Kidney (tissue), 22 donors: ENCODE measurements at regions of chr5 and their contacts with region 1.

Region 1: DNA sequence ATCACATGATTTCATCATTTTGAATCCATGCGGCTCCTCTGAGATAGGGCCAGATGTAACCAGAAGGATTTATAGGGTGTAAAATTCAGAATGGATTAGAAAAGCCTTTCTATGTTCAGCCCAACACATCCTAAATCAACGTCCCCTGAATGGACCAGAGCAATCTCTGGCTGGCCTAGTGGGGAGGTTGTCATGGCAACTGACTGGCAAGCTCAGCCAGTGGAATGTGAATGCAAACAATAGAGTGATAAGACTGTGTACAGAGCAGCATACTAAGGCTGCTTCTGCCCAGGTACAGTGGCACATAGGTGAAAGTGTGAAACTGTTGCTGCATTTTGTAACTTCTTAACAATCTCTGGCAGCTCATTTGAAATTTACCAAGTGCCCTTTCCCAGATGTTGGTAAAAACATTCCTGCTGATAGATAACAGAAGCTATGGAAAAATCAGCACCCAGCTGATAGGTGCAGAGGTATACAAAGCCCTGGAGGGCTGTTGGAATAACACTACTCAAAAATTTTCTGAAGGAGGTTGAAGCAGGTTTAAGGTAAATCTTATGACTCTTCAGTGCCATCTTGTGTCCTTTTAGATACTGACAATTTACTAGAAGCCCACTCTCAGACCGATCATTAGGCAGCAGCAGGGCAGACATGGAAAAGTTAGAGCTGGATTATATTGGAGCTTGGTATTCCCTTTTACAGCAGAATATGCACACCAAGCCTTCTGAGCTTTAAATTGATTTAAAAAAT is 267.2 kb downstream of the RAB3C start:
- DNase-seq: peak in 4 of 5 donors; percentile 21 to 72 (median 54)
- H3K4me3 ChIP-seq: no peak overlapping the region
- H3K27ac ChIP-seq: no peak overlapping the region
- H3K4me1 ChIP-seq: no peaks in the 10 kb centered on the region
- H3K27me3 ChIP-seq: no peaks in the 10 kb centered on the region
- CTCF ChIP-seq: peak; percentile 55

Region 2: GRCh38 chr5:58498340-58498942 is 351.7 kb before region 1 on chr5:
- intact Hi-C with region 1: loop called (anchors 5 kb)
- DNase-seq: peak in 3 of 5 donors; percentile 29 to 62 (median 41)
- H3K4me3 ChIP-seq: no peak overlapping the region
- H3K27ac ChIP-seq: no peak overlapping the region
- H3K4me1 ChIP-seq: no peaks in the 10 kb centered on the region
- H3K27me3 ChIP-seq: no peaks in the 10 kb centered on the region
- CTCF ChIP-seq: peak; percentile 68

Region 3: DNA sequence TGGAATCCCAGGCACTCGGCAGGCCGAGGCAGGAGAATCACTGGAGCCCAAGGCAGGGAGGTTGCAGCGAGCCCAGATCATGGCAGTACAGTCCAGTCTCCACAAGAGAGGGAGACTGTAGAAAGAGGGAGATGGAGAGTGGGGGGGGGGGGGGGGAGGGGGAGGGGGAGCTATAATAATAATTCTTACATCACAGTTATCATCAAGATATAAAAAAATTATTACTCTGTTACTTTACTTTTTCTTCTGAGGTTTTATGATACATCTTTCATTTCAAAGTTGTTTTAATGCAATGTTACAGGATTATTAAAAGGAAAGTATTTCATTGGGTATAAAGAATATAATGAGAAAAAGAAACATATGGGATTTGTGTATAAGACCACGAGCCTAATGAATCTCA is 285.1 kb before region 1 on chr5:
- intact Hi-C with region 1: no loop called
- DNase-seq: no peak
- H3K4me3 ChIP-seq: no peak overlapping the region
- H3K27ac ChIP-seq: no peak overlapping the region
- H3K4me1 ChIP-seq: no peaks in the 10 kb centered on the region
- H3K27me3 ChIP-seq: no peaks in the 10 kb centered on the region
- CTCF ChIP-seq: no peak

Region 4: DNA sequence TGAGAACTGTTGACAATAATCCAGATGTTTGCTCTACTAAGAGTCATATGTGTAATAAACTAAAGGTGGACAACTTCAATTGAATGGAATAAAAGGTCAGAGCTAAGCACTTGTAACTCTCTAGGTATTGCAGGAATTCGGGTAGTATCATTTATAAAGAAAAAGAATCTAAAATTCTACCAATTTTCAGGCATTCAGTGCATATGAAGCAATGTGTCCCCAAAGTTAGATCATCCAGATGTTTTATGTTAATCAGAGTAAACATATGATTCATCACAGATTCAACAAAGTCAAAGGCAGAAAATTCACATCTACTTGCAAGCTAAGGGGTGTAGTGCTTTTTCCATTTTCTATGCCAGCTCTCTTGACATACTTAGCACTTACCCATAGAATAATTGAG is 566.4 kb after region 1 on chr5:
- intact Hi-C with region 1: no loop called
- DNase-seq: no peak
- H3K4me3 ChIP-seq: no peak overlapping the region
- H3K27ac ChIP-seq: no peak overlapping the region
- H3K4me1 ChIP-seq: no peaks in the 10 kb centered on the region
- H3K27me3 ChIP-seq: no peaks in the 10 kb centered on the region
- CTCF ChIP-seq: no peak